GM10248 (cell line): ENCODE measurements at regions of chr2 and their contacts with region 1.

Region 1: GRCh38 chr2:222875482-222875881 is 14.6 kb downstream of the ACSL3 start:
- DNase-seq: no peak
- CTCF ChIP-seq: no peak

Region 2: DNA sequence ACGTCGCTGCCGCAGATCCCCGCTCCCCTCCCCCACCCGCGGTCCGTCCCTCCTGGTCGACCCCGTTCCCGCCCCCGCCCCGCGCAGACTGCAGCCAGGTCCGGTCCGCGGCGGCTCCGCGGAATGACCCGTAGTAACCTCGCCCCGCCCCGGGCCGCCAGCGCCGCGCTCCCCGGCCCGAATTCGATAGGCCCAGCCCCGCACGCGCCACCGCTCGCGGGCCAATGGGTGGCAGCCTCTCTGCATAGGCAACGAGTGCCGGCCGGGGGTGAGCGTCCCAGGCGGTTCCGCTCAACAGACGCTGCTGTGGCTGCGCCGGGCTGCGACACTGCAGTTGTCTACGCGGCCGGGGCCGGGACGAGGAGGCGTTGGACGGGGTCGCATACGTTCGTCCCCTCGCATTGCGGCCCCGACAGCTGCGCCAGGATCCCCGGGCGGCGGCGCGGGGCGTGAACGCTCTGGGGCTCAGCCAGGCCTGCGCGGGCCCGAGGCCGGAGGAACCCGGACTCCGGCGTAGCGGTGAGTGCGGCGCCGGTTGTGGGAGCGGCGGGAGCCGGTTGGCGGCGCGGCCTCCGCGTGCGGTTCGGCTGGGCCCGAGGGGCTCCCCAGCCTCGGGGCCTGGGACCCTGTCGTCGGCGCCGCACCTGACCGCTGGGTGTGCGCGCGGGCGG is 14.6 kb before region 1 on chr2 and contains the start of gene ACSL3:
- CTCF ChIA-PET with region 1: interaction called, 12 read pairs
- POLR2A ChIA-PET with region 1: no interaction called
- DNase-seq: peak; percentile 97
- CTCF ChIP-seq: no peak